ENCODE measurements at regions of chr1 and their contacts with region 1.

Region 1: GRCh38 chr1:70247768-70248167 is 26.6 kb downstream of the SRSF11 start:
- DNase-seq: no peak
- H3K4me3 ChIP-seq: no peak overlapping the region
- H3K27ac ChIP-seq: no peak overlapping the region
- H3K4me1 ChIP-seq: no peaks in the 10 kb centered on the region
- H3K27me3 ChIP-seq: no peaks in the 10 kb centered on the region
- CTCF ChIP-seq: no peak
- POLR2A ChIP-seq: no peak

Region 2: GRCh38 chr1:71068325-71069240 is 820.8 kb after region 1 on chr1:
- intact Hi-C with region 1: loop called (anchors 10 kb)
- DNase-seq: no peak
- H3K4me3 ChIP-seq: no peak overlapping the region
- H3K27ac ChIP-seq: no peak overlapping the region
- H3K4me1 ChIP-seq: peaks cover 0 to 13% (median 0%) of the 10 kb centered on the region in 6 donors
- H3K27me3 ChIP-seq: no peaks in the 10 kb centered on the region
- CTCF ChIP-seq: no peak
- POLR2A ChIP-seq: no peak

Measured in spleen (tissue), 13 donors.